Colonic mucosa (tissue), 4 donors: ENCODE measurements at regions of chr3 and their contacts with region 1.

Region 1: DNA sequence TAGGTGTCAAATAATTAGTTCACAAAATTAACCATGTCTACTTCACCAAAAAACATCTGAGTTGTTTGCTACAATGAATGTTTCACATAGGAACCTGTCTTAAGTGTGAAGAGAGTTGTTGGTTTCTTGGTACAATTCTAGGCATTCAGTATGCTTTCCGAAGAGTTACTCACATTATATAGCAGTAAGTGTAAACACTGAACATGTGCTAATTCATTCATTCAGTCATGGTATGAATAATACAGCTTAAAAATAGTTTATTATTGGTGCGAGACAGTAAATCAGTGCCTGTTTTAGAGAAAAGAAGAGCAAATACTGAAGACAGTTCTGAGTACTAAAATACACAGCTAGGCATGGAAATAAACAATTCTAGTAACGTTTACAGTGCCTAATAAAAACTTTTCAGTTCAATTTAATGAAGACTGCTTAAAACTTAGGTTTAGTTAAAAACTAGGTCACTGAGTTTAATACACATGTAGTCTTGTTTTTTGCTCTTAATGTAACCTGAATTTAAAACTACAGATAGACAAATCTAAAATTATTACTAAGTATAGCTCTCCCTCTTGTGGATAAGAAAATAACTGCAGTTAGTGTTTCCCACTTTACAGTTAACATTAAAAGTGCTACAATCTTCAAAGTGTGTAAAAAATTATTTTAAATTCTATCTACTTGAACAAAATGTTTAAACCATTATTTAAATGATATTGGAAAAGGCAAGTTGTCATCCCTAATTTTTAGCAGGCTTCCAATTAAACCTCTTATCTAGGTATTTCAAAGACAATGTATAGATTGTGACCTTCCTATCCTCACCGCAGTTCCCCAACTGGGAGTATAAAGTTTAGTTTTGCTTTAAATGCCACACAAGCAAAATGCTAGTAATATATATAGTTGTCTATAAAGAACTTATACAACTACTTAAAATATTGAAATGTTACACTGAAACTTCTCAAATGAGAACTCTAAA is 20.1 kb upstream of the ZCWPW2 start:
- DNase-seq: no peak
- H3K4me3 ChIP-seq: no peak overlapping the region
- H3K27ac ChIP-seq: no peak overlapping the region
- H3K4me1 ChIP-seq: no peaks in the 10 kb centered on the region
- H3K27me3 ChIP-seq: no peaks in the 10 kb centered on the region
- CTCF ChIP-seq: peak; percentile 70

Region 2: DNA sequence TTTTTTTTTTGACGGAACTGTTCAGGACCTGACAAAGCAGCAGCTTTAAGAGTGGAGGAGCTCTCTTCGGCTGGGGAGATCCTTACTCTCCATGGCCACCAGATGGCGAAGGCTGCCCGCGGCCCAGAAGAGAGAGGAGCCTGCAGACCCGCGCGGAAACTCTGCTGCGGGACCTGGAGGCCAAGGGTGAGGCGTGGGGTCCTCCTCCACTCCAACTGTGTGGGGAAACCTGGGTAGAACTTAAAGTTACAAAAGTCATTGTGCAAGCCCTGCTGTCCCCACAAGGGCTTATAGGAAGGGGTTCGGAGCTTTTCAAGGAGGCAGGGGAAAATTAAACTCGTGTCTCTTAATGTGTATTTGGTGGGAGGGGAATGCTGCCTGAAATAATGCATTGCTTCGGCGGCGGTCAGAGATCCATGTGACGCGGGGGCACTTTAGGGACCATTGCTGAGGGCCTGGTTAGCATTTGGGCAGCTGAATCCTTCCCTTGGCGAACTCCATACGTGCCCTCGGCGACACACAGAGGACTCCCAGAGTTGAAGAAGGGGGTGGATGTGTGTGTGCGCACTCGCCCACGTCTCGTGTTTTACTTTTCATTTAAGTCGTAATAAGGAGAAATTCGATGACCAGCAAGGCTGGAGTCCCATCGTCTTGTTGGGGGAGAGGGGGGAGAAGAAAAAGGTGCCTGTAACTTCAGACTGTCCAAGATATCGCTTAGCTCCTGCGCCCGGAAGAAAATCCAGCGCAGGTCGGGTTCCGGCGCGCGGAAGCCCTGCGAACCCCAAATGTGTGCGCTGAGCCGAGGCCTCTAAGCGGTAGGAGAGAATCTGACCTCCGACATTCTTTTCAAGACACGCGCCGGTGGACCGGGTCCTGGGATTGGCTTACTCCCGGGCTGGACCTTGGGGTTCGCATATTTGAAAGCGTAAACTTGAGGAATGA is 616.1 kb before region 1 on chr3:
- intact Hi-C with region 1: loop called (anchors 2 kb)
- DNase-seq: peak; percentile 76
- H3K4me3 ChIP-seq: peak overlapping the region; percentile 54
- H3K27ac ChIP-seq: no peak overlapping the region
- H3K4me1 ChIP-seq: peaks cover 7% of the 10 kb centered on the region
- H3K27me3 ChIP-seq: peaks cover 28% of the 10 kb centered on the region
- CTCF ChIP-seq: peak; percentile 64